ENCODE measurements at regions of chrX and their contacts with region 1.

Region 1: GRCh38 chrX:77910108-77910840 is at the start of gene ATP7A:
- DNase-seq: peak; percentile 52 to 85 (median 80)
- H3K4me3 ChIP-seq: peak within 1 kb of the TSS; percentile 24 to 81 (median 64)
- H3K27ac ChIP-seq: peak within 1 kb of the TSS in 58 of 59 donors; percentile 2 to 90 (median 82)
- H3K27me3 ChIP-seq: peaks cover 0 to 70% (median 7%) of the 10 kb centered on the region in 45 donors
- CTCF ChIP-seq: peak in 55 of 56 donors; percentile 30 to 70 (median 57)
- total RNA-seq, gene ATP7A: 4.2 to 11.0 (median 6.7) TPM

Region 2: GRCh38 chrX:77493677-77494553 is 416.4 kb before region 1 on chrX:
- intact Hi-C with region 1: no loop called
- DNase-seq: no peak
- H3K4me3 ChIP-seq: no peak overlapping the region
- H3K27ac ChIP-seq: no peak overlapping the region
- H3K27me3 ChIP-seq: peaks cover 0 to 57% (median 12%) of the 10 kb centered on the region in 45 donors
- CTCF ChIP-seq: no peak

Region 3: GRCh38 chrX:77937271-77937670 is 27.0 kb after region 1 on chrX:
- intact Hi-C with region 1: no loop called
- DNase-seq: no peak
- H3K4me3 ChIP-seq: no peak overlapping the region
- H3K27ac ChIP-seq: no peak overlapping the region
- H3K27me3 ChIP-seq: peaks cover 0 to 46% (median 5%) of the 10 kb centered on the region in 45 donors
- CTCF ChIP-seq: no peak

Region 4: GRCh38 chrX:78024349-78025108 is 114.3 kb after region 1 on chrX:
- intact Hi-C with region 1: loop called (anchors 5 to 10 kb)
- DNase-seq: no peak
- H3K4me3 ChIP-seq: no peak overlapping the region
- H3K27ac ChIP-seq: no peak overlapping the region
- H3K27me3 ChIP-seq: peaks cover 0 to 52% (median 5%) of the 10 kb centered on the region in 45 donors
- CTCF ChIP-seq: peak in 47 of 56 donors; percentile 15 to 55 (median 31)

Region 5: GRCh38 chrX:78103623-78104446 is 193.6 kb after region 1 on chrX and contains the start of gene PGK1:
- intact Hi-C with region 1: loop called in 1 of 2 experiments (anchors 5 kb)
- DNase-seq: peak; percentile 90 to 96 (median 94)
- H3K4me3 ChIP-seq: peak within 1 kb of the TSS; percentile 48 to 90 (median 74)
- H3K27ac ChIP-seq: peak within 1 kb of the TSS; percentile 58 to 97 (median 91)
- H3K27me3 ChIP-seq: peaks cover 0 to 39% (median 8%) of the 10 kb centered on the region in 45 donors
- CTCF ChIP-seq: peak in 13 of 56 donors; percentile 10 to 34 (median 17)
- total RNA-seq, gene PGK1: 194 to 664 (median 404) TPM

Measured in dorsolateral prefrontal cortex (tissue), 120 donors.